ENCODE measurements at regions of chr12 and their contacts with region 1.

Region 1: DNA sequence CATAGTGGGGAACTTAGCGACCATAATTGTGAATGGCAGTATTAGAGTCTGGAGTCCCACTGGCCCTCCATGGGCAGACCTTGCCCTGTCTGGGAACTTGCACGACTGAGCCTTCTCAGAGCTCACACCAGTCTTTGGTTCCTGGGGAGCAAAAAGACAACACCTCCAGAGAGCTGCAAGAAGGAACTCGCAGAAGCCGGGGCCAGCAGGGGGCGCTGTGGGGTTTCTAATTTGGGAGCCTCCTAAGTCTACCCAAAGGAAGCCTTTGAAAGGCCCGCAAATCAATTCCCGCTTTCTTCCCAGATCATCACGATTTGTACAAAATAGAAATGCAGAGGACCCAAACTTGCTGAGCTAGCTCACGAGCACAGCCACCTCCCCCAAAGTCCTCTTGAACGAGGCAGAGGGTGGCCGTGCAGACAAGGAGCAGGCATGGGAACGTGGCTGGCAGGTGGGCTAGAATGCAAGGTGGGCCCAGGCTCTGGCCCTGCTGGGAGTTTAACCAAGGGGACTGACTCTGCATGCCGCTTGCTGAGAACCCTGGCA is 46.3 kb upstream of the FBXO21 start:
- DNase-seq: peak; percentile 67
- H3K4me3 ChIP-seq: no peak overlapping the region
- H3K27ac ChIP-seq: no peak overlapping the region
- H3K4me1 ChIP-seq: no peaks in the 10 kb centered on the region
- CTCF ChIP-seq: peak; percentile 98

Region 2: GRCh38 chr12:117552971-117553370 is 316.4 kb after region 1 on chr12:
- CTCF ChIA-PET with region 1: no interaction called
- POLR2A ChIA-PET with region 1: no interaction called
- intact Hi-C with region 1: no loop called
- DNase-seq: no peak
- H3K4me3 ChIP-seq: no peak overlapping the region
- H3K27ac ChIP-seq: no peak overlapping the region
- H3K4me1 ChIP-seq: no peaks in the 10 kb centered on the region
- CTCF ChIP-seq: no peak

Region 3: GRCh38 chr12:117587631-117588287 is 351.2 kb after region 1 on chr12:
- CTCF ChIA-PET with region 1: no interaction called
- POLR2A ChIA-PET with region 1: no interaction called
- intact Hi-C with region 1: loop called (anchors 10 kb)
- DNase-seq: peak; percentile 50
- H3K4me3 ChIP-seq: no peak overlapping the region
- H3K27ac ChIP-seq: no peak overlapping the region
- H3K4me1 ChIP-seq: no peaks in the 10 kb centered on the region
- CTCF ChIP-seq: peak; percentile 86